Prostate gland (tissue), 2 donors: ENCODE measurements at regions of chr3 and their contacts with region 1.

Region 1: DNA sequence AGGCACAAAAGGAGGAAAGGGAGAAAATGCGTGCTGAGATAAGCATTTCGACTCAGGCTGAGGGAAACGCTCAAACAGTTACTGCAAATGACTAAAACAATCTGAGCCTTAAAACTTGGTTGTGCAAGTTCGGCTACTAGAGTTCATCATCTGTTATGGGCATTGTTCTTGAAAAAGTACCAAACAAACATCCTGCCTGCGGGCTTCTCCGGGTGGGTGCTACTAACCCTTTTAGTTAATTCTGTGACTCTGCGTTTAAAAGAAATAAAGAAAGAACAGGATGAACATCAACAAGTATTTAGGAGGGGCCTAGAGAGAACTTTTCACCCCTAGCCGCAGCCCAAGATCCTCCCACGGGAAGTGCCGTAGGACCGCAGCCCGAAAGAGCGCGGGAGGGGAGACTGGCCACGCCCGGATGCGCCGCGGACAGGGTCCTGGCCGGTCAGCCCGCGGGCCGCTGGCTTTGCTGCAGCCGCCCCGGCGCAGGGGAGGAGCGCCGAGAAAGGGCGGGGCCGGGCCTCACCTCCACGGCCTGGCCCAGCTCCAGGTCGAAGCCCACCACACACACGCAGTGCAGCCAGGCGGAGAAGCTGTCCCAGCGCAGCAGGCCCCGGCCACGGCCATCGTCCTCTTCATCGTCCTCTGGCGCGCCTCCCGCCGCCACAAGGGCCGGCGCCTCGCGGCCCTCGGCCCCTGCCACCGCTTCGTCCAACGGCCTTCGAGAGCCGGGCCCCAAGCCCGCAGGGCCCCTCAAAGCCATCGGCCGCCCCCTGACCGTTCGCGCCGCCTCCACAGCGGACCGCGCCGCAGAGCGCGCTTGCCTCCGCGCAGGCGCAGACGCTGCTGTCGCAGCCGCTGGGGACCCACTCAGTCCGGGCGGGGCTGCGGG is at the start of gene DENND6A:
- DNase-seq: peak; percentile 93
- H3K4me3 ChIP-seq: peak within 1 kb of the TSS; percentile 74 to 86
- H3K27ac ChIP-seq: peak within 1 kb of the TSS; percentile 90 to 95
- H3K4me1 ChIP-seq: no peaks in the 10 kb centered on the region
- H3K27me3 ChIP-seq: no peaks in the 10 kb centered on the region
- CTCF ChIP-seq: peak in 2 of 4 experiments; percentile 14 to 15
- POLR2A ChIP-seq: peak; percentile 95
- total RNA-seq, gene DENND6A: 19.4 to 26.1 TPM

Region 2: DNA sequence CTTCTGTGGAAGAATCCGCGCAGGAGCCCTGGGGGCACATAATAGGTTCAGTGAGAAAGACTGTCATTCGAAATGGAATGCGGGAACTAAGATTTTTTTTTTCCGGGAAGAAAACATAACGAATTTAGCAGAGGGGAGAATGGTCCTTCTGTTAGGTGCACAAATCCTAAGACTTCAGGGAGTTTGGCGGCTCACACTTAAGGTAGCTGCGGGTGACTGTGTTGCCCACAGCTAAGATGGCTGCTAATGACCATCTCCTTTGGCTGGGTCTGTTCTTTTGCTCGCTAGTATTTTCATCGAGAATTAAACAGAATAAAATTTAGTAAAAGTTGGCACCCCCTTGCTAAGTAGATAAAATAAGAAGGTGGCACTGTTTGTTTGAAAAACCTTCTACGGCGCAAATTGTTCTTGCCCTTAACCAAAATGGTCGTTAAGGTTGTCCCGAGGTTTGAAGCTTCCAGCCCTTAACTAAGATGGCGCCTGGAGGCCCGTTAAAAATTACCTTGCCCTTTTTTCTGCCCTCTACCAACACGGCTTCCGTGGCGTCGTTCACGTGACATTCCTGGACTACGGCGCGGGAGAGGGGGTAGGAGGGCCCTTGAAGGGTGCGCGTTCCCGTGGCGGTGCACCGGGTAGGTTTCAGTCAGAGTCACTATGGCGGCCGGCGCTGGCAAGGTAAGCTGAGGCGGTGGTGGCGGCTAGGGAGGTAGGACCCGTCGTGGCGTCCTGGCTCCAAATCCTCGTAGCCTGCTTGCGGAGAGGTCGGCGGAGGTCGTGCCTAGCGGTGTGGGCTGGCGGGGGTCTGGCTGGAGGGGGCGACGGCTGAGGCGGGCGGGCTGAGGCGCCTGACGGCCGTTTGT is 63.4 kb after region 1 on chr3 and contains the start of gene SLMAP:
- intact Hi-C with region 1: loop called (anchors 5 kb)
- DNase-seq: peak; percentile 98
- H3K4me3 ChIP-seq: peak within 1 kb of the TSS; percentile 85 to 91
- H3K27ac ChIP-seq: peak within 1 kb of the TSS; percentile 85
- H3K4me1 ChIP-seq: no peaks in the 10 kb centered on the region
- H3K27me3 ChIP-seq: no peaks in the 10 kb centered on the region
- CTCF ChIP-seq: peak in 2 of 4 experiments; percentile 28
- POLR2A ChIP-seq: peak; percentile 76
- total RNA-seq, gene SLMAP: 76.3 to 131 TPM

Region 3: DNA sequence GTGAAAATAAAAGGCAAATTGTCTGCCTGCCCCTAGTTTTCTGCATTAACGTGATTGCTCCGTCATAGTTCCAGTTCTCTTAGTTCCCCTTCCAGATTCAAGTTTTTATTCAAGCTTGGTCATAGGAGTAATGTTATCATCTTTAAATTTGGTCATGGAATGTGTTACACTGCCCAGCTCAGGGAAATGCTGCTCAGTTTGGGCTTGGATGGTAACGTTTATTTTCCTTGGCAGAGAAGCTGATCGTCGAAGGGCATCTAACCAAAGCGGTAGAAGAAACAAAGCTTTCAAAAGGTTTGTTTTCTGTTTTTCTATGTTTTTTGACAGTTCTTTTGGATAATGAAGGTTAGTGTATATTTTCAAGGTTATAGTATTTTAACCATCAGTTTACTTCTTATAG is 197.3 kb after region 1 on chr3:
- intact Hi-C with region 1: no loop called
- DNase-seq: no peak
- H3K4me3 ChIP-seq: no peak overlapping the region
- H3K27ac ChIP-seq: peak overlapping the region; percentile 58 to 63
- H3K4me1 ChIP-seq: no peaks in the 10 kb centered on the region
- H3K27me3 ChIP-seq: no peaks in the 10 kb centered on the region
- CTCF ChIP-seq: no peak
- POLR2A ChIP-seq: no peak